Thyroid gland (tissue), 4 donors: ENCODE measurements at regions of chr14 and their contacts with region 1.

Region 1: GRCh38 chr14:102096214-102097114 is 9.6 kb upstream of the HSP90AA1 start:
- DNase-seq: peak; percentile 96 to 97
- H3K4me3 ChIP-seq: no peak overlapping the region
- H3K27ac ChIP-seq: peak overlapping the region; percentile 51 to 55 (median 52)
- H3K4me1 ChIP-seq: peaks cover 14 to 24% of the 10 kb centered on the region in 2 donors
- H3K27me3 ChIP-seq: no peaks in the 10 kb centered on the region
- CTCF ChIP-seq: peak; percentile 48 to 91 (median 78)
- POLR2A ChIP-seq: no peak

Region 2: GRCh38 chr14:101964297-101965144 is 131.9 kb before region 1 on chr14 and contains the start of gene DYNC1H1:
- intact Hi-C with region 1: loop called (anchors 10 kb)
- DNase-seq: peak; percentile 94 to 97
- H3K4me3 ChIP-seq: peak within 1 kb of the TSS; percentile 91 to 100 (median 98)
- H3K27ac ChIP-seq: peak within 1 kb of the TSS; percentile 92 to 97 (median 96)
- H3K4me1 ChIP-seq: peaks cover 22 to 39% of the 10 kb centered on the region in 2 donors
- H3K27me3 ChIP-seq: no peaks in the 10 kb centered on the region
- CTCF ChIP-seq: peak in 1 of 6 experiments; percentile 11
- POLR2A ChIP-seq: peak; percentile 93 to 99
- total RNA-seq, gene DYNC1H1: 464 to 818 (median 553) TPM

Region 3: DNA sequence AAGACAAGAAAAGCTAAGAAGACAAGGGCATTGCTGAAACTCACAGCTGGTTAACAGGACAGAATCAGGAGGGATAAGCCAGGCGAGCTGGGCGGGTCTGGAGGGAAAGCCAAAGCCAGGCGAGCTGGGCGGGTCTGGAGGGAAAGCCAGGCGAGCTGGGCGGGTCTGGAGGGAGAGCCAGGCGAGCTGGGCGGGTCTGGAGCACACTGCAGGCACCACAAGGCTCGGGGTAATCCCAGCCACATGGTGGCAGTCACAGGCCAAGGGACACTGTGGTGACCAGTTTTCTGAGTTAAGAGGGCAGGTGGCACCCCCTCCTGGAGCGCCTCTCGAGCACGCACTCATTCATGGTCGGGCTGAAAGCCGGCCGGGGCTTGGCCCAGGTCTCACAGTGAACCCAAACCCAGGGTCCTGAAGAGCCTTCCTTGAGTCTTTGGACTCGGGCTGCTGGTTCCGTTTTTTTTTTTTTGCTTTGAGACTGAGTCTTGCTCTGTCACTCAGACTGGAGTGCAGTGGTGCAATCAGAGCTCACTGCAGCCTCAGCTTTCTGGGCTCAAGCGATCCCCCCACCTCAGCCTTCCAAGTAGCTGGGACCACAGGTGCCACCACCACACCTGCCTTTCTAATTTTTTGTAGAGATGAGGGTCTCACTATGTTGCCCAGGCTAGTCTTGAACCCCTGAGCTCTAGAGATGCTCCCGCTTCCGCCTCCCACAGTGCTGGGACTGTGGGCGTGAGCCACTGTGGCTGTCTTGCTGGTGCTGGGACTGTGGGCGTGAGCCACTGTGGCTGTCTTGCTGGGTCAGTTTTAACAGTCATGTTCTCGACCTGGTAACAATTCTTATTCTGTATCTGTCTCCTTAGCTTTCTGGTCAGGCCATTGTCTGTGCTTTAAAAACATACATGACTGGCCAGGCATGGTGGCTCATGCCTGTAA is 49.9 kb before region 1 on chr14:
- intact Hi-C with region 1: loop called (anchors 10 kb)
- DNase-seq: peak; percentile 99
- H3K4me3 ChIP-seq: no peak overlapping the region
- H3K27ac ChIP-seq: peak overlapping the region in 2 of 3 donors; percentile 24 to 52
- H3K4me1 ChIP-seq: peaks cover 6 to 12% of the 10 kb centered on the region in 2 donors
- H3K27me3 ChIP-seq: no peaks in the 10 kb centered on the region
- CTCF ChIP-seq: peak in 5 of 6 experiments; percentile 22 to 91 (median 60)
- POLR2A ChIP-seq: no peak

Region 4: DNA sequence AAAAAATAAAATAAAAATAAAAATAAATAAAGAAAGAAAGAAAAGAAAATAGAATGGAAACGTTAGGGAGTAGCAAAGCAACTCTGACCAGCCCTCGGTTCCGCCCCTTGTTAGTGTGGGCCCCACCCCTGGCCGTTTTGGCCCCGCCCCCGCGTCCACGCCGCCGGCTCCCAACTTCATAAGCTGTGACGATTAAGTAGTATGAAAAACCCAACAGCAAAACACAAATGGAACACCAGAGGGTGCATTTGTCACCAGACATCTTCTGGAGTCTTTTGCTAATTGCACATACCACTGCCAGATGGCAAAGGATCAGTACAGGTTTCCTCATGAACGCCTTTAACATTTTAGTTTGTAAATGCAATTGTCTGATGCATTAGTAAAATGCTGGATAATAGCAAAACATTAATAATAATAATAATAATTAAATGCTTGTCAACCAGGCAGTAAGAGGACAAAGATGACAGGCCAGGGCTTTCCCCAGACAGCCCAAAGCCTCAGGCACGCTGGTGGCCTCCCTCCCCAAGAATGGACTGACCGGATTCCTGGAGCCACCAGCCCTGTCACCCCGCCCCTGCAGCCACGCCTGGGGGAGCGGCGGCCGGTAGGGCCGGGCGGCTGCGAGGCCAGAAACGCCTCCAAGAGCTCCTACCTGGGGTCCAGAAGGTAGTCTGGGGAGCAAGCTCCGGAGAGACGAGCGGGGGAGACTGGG is 33.2 kb before region 1 on chr14:
- intact Hi-C with region 1: loop called (anchors 5 kb)
- DNase-seq: peak; percentile 88 to 89
- H3K4me3 ChIP-seq: no peak overlapping the region
- H3K27ac ChIP-seq: peak overlapping the region in 1 of 3 donors; percentile 25
- H3K4me1 ChIP-seq: peaks cover 3 to 10% of the 10 kb centered on the region in 2 donors
- H3K27me3 ChIP-seq: no peaks in the 10 kb centered on the region
- CTCF ChIP-seq: peak; percentile 12 to 63 (median 50)
- POLR2A ChIP-seq: no peak